ENCODE measurements at regions of chr3 and their contacts with region 1.

Region 1: DNA sequence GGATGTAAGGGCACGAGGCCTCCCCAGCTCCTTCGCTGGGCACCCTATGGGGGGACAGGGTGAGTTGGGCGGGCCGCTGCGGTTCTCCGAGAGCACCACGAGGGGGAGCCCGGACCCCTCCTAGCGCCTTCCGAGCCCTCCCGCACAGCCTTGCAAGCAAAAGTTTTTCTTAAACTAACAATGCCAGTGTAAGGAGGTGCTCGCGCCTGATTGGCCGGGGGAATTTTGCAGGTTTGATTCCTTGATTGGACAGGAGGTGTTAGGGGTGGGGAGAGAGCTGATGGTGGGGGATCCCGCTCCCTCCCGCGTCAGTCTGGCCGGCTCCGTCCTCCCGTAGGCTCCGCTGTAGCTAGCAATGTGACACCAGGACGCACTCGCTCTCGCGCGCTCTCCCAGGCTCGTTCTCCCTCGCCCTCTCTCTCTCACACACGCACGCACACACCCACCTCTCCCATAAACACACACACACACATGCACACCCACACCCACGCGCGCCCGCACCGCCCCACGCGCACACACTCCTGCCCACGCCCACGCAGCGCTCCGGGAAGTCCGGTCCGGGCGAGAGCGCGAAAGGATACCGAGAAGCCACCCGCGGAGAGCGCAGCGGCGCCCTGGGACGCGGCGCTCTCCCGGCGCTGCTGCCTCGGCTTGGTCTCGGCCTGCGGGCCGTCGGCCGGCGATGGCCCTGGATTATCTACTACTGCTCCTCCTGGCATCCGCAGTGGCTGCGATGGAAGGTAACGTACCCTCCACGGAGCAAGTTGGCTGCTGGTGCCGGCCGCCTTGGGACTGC is at the start of gene EPHB1:
- DNase-seq: peak; percentile 76
- ATAC-seq: peak; percentile 93
- total RNA-seq, gene EPHB1: 0.31 to 1.1 TPM

Region 2: GRCh38 chr3:135503760-135504686 is 708.9 kb after region 1 on chr3:
- intact Hi-C with region 1: loop called in 1 of 2 experiments (anchors 10 kb)
- DNase-seq: peak; percentile 28 to 60
- ATAC-seq: peak; percentile 64

Region 3: DNA sequence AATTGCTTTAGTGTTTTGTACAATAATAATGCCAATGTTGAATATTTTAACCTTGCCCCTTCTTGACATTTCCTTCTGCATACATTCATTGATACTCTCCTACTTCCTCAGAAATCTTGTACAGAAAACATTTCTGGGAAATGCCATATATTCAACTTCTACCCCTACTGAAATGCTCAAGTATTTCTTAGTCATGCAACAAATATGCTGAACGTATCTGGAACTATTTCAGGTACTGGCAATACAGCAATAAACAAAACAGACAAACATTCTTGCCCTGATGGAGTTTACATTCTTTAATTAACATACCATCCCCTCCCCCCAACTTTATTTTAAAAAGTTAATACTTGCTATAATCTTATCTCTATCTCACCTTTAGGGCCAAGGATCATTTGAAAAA is 1809.8 kb after region 1 on chr3:
- intact Hi-C with region 1: no loop called
- DNase-seq: no peak
- ATAC-seq: no peak